ENCODE measurements at regions of chr13 and their contacts with region 1.

Region 1: GRCh38 chr13:41652727-41653361 is 195.5 kb downstream of the RGCC start:
- DNase-seq: peak in 2 of 4 donors; percentile 46 to 72
- ATAC-seq: peak; percentile 75
- H3K4me3 ChIP-seq: no peak overlapping the region
- H3K27ac ChIP-seq: peak overlapping the region; percentile 36 to 42
- H3K4me1 ChIP-seq: peaks cover 10 to 41% of the 10 kb centered on the region in 2 donors
- H3K27me3 ChIP-seq: no peaks in the 10 kb centered on the region
- CTCF ChIP-seq: peak in 1 of 2 donors; percentile 39

Region 2: DNA sequence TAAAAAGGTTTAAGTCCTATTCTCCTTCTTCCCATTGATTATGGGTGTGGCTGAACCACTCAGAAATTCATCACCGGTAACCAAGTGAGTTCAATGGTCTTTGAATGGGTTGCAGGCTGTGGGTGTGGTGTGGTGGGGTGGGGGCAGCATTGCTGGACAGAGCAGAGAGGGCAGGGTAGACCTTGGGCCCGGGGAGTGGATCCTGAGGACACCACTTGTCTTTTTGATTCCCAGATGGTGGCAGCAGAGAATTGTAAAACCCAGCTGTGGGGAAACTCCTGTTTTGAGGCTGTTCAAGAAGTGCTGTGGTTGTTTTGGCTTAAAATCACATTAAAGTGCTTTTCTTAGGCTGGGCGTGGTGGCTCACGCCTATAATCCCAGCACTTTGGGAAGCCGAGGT is 241.3 kb before region 1 on chr13:
- intact Hi-C with region 1: loop called in 1 of 2 experiments (anchors 10 kb)
- DNase-seq: peak in 2 of 4 donors; percentile 54 to 72
- ATAC-seq: peak; percentile 86
- H3K4me3 ChIP-seq: no peak overlapping the region
- H3K27ac ChIP-seq: no peak overlapping the region
- H3K4me1 ChIP-seq: no peaks in the 10 kb centered on the region
- H3K27me3 ChIP-seq: no peaks in the 10 kb centered on the region
- CTCF ChIP-seq: peak in 1 of 2 donors; percentile 26

Region 3: DNA sequence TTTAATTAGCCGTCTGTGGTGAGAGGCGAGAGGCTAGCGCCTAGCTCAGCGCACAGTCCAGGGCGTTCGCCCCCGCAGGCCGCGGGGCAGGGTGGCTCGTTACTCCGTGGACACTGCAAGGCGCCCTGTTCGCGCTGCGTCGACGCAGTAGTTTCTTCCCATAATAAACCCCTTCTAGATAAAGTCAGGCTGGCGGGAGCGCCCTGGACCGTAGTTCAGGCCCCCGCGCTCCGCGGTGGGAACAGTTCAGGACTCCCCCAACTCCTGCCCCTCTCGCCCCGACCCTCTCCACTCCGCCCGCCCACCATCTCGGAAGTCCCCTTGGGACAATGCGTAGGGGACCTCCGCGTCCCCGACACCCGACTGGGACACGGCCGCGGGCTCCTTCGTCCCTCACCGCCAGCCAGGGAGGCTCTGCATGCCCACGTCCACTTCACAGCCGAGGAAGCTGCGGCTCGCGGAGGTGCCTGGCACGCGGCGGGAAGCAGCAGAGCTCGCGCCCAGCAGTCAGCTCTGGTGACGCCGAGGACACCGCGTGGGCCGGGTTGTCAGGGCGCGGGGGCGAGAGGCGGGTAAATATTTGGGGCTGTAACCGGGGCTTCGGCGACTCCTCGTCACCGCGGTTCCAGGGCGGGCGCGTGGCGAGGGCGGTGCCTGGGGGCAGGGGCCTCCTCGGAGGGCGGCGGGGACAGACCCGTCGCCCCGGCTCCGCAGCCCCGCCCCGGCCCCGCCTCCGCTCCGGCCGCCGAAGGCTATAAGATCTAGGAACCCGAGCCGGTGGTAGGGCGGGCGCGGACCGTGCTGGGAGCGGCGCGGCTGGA is 195.9 kb before region 1 on chr13 and contains the start of gene RGCC:
- intact Hi-C with region 1: loop called in 1 of 2 experiments (anchors 10 kb)
- DNase-seq: peak; percentile 59 to 97 (median 86)
- ATAC-seq: peak; percentile 90
- H3K4me3 ChIP-seq: peak within 1 kb of the TSS; percentile 59 to 77
- H3K27ac ChIP-seq: peak within 1 kb of the TSS; percentile 83
- H3K4me1 ChIP-seq: peaks cover 0 to 51% of the 10 kb centered on the region in 2 donors
- H3K27me3 ChIP-seq: peaks cover 0 to 19% of the 10 kb centered on the region in 2 donors
- CTCF ChIP-seq: no peak
- polyA plus RNA-seq, gene RGCC: 93.4 to 164 (median 130) TPM

Region 4: DNA sequence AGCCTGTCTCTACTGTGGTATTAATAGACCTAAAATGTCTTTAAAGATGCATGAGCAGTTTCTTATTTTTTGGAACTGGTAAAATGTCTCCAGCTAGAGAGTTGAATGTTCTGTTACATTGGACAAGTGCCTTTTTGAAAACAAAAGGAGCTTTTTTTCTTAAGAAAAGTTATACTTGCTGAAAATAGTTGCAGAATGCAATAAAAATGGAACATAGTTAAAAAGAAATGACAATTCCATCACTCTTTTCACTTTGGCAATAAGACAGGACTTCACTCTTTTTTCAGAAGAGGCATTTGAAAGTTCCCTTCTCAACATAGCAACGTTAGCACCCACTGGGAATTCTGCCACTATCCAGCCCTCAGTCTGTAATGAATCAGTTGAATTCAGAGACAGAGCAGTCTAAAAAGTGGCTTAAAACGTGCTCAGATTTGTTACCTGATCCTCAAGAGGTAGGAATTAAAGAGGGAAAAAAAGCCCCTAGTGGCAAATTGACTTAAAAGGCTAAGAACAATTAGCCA is 185.4 kb before region 1 on chr13:
- intact Hi-C with region 1: no loop called
- DNase-seq: no peak
- ATAC-seq: no peak
- H3K4me3 ChIP-seq: no peak overlapping the region
- H3K27ac ChIP-seq: peak overlapping the region in 1 of 2 donors; percentile 4
- H3K4me1 ChIP-seq: peaks cover 11 to 39% of the 10 kb centered on the region in 2 donors
- H3K27me3 ChIP-seq: no peaks in the 10 kb centered on the region
- CTCF ChIP-seq: no peak

Region 5: DNA sequence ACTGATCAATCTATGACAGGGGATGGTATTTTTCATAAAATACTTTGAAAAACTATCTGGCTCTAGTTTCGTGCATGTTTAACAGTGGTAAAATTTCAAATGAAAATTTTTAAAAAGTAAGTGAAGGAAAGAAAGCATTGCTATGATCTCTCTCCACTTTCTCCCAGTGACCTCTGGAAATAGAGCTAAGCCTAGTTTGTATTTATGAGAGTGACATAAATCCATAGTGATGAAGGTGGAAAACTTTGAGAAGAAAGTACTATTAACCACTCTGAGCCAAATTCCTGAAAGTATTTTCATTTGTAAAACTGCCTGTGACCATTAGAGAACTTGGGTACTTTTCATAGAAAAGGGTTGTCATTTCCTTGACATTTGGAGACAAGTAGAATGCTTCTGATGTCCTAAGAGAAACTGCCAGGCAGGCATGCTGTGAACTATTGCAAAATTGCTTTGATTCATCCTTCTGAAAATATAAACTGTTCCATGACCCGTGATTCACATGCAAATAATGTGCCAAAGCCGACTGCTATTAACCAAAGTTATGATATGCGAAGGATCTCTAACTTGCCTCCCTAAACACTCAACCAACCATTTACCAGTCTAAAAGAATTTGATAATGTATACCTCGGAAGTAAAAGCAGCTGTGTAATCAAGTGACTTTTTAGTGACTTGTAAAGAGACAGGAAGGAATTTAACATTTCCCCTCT is 174.8 kb after region 1 on chr13:
- intact Hi-C with region 1: no loop called
- DNase-seq: peak in 2 of 4 donors; percentile 44 to 53
- ATAC-seq: peak; percentile 63
- H3K4me3 ChIP-seq: no peak overlapping the region
- H3K27ac ChIP-seq: peak overlapping the region in 1 of 2 donors; percentile 20
- H3K4me1 ChIP-seq: no peaks in the 10 kb centered on the region
- H3K27me3 ChIP-seq: no peaks in the 10 kb centered on the region
- CTCF ChIP-seq: no peak

Measured in left lung (tissue), 14 donors.